CD4-positive, alpha-beta memory T cell (primary cell): ENCODE measurements at regions of chr2 and their contacts with region 1.

Region 1: GRCh38 chr2:7725171-7725849 is 808.1 kb downstream of the RNF144A start:
- DNase-seq: peak; percentile 65 to 74 (median 69)
- H3K4me3 ChIP-seq: peak overlapping the region in 1 of 2 donors; percentile 13
- H3K4me3 Mint-ChIP-seq: peak overlapping the region; percentile 53 to 92 (median 80)
- H3K27ac ChIP-seq: peak overlapping the region; percentile 26
- H3K27ac Mint-ChIP-seq: peak overlapping the region; percentile 68 to 97 (median 88)
- H3K4me1 ChIP-seq: peaks cover 40% of the 10 kb centered on the region
- H3K4me1 Mint-ChIP-seq: peaks cover 29 to 77% (median 54%) of the 10 kb centered on the region in 4 donors
- H3K27me3 ChIP-seq: no peaks in the 10 kb centered on the region
- H3K27me3 Mint-ChIP-seq: no peaks in the 10 kb centered on the region

Region 2: DNA sequence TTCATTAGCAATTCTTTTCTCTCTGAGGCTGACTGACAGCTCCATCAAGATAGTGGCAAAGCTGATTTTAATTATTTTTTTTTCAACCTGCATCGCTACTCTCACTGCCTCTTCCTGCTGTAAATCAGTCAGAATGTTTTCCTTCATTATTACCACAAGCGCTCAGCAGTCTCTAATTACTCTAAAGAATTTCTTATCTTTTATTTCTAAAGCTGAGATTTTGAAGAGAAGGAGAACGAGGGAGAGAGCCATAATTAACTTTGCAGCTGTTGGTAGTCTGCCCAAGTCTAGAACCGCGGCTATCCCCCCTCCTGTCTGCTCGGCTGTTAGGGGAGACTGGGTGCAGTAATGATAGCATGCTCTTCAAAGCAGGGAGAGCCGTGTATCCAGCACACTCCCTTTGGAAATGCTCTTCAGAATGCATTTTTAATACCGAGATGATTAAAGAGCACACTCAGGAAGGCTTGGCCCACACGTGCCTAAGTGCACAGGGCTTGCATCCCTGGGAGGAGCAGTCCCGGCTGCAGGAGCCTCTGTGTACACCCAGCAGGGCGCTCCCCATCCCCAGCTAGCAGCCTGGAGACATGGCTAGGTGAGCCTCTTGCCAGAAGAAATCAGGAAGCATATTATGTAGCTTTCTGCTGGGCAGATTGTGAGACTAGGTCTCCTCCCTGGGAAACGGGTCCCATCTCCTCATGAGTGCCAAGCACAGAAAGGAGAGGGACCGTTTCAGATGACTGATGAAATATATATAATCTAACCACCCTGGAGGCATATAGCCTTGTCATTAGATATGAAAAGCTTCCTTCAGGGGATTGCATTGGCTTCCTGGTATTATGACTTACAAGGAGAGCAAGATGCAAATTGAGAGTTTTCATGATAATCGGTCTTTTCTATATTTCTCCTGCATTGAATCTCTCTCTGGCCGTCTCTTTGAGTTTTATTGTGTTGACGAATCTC is 1414.8 kb before region 1 on chr2:
- CTCF ChIA-PET with region 1: no interaction called
- POLR2A ChIA-PET with region 1: no interaction called
- intact Hi-C with region 1: no loop called
- DNase-seq: no peak
- H3K4me3 ChIP-seq: no peak overlapping the region
- H3K4me3 Mint-ChIP-seq: no peak overlapping the region
- H3K27ac ChIP-seq: no peak overlapping the region
- H3K27ac Mint-ChIP-seq: no peak overlapping the region
- H3K4me1 ChIP-seq: no peaks in the 10 kb centered on the region
- H3K4me1 Mint-ChIP-seq: no peaks in the 10 kb centered on the region
- H3K27me3 ChIP-seq: no peaks in the 10 kb centered on the region
- H3K27me3 Mint-ChIP-seq: peaks cover 0 to 2% of the 10 kb centered on the region in 2 donors

Region 3: GRCh38 chr2:7203055-7203467 is 522.2 kb before region 1 on chr2:
- CTCF ChIA-PET with region 1: no interaction called
- POLR2A ChIA-PET with region 1: no interaction called
- intact Hi-C with region 1: loop called (anchors 5 kb)
- DNase-seq: peak; percentile 39 to 54 (median 48)
- H3K4me3 ChIP-seq: no peak overlapping the region
- H3K4me3 Mint-ChIP-seq: no peak overlapping the region
- H3K27ac ChIP-seq: no peak overlapping the region
- H3K27ac Mint-ChIP-seq: no peak overlapping the region
- H3K4me1 ChIP-seq: no peaks in the 10 kb centered on the region
- H3K4me1 Mint-ChIP-seq: no peaks in the 10 kb centered on the region
- H3K27me3 ChIP-seq: no peaks in the 10 kb centered on the region
- H3K27me3 Mint-ChIP-seq: peaks cover 0 to 2% of the 10 kb centered on the region in 2 donors

Region 4: GRCh38 chr2:7567646-7568045 is 157.7 kb before region 1 on chr2:
- CTCF ChIA-PET with region 1: interaction called, 10 read pairs
- POLR2A ChIA-PET with region 1: interaction called, 12 read pairs
- intact Hi-C with region 1: no loop called
- DNase-seq: peak in 4 of 5 donors; percentile 59 to 64 (median 60)
- H3K4me3 ChIP-seq: no peak overlapping the region
- H3K4me3 Mint-ChIP-seq: peak overlapping the region; percentile 3 to 78 (median 56)
- H3K27ac ChIP-seq: peak overlapping the region; percentile 16
- H3K27ac Mint-ChIP-seq: peak overlapping the region; percentile 48 to 93 (median 89)
- H3K4me1 ChIP-seq: peaks cover 40% of the 10 kb centered on the region
- H3K4me1 Mint-ChIP-seq: peaks cover 27 to 57% (median 46%) of the 10 kb centered on the region in 4 donors
- H3K27me3 ChIP-seq: no peaks in the 10 kb centered on the region
- H3K27me3 Mint-ChIP-seq: no peaks in the 10 kb centered on the region

Region 5: DNA sequence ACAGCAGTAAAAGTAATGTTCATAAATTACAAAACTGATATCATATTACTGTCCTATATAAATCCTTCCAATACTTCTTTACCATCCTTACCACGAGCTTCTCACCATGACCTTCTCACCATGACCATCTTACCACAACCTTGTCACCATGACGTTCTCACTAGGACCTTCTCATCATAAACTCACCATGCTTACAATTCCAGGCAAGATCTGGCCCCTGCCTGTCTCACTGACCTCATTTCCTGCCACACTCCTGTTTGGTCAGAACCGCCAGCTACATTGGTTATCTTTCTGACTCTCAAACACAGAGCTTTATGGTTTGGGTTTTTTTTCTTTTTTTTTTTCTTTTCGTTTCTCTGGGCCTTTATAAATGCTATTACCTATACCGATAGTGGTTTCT is 19.5 kb after region 1 on chr2:
- CTCF ChIA-PET with region 1: interaction called, 7 read pairs
- POLR2A ChIA-PET with region 1: interaction called, 10 read pairs
- intact Hi-C with region 1: loop called (anchors 2 kb)
- DNase-seq: peak; percentile 71 to 83 (median 75)
- H3K4me3 ChIP-seq: no peak overlapping the region
- H3K4me3 Mint-ChIP-seq: peak overlapping the region in 5 of 8 donors; percentile 7 to 71 (median 21)
- H3K27ac ChIP-seq: no peak overlapping the region
- H3K27ac Mint-ChIP-seq: peak overlapping the region; percentile 36 to 96 (median 90)
- H3K4me1 ChIP-seq: peaks cover 10% of the 10 kb centered on the region
- H3K4me1 Mint-ChIP-seq: peaks cover 17 to 45% (median 28%) of the 10 kb centered on the region in 4 donors
- H3K27me3 ChIP-seq: no peaks in the 10 kb centered on the region
- H3K27me3 Mint-ChIP-seq: no peaks in the 10 kb centered on the region

Region 6: GRCh38 chr2:8544786-8545694 is 819.7 kb after region 1 on chr2:
- CTCF ChIA-PET with region 1: interaction called, 10 read pairs
- POLR2A ChIA-PET with region 1: interaction called, 9 read pairs
- intact Hi-C with region 1: loop called (anchors 5 kb)
- DNase-seq: peak; percentile 61 to 90 (median 70)
- H3K4me3 ChIP-seq: no peak overlapping the region
- H3K4me3 Mint-ChIP-seq: peak overlapping the region; percentile 35 to 85 (median 62)
- H3K27ac ChIP-seq: peak overlapping the region; percentile 69
- H3K27ac Mint-ChIP-seq: peak overlapping the region; percentile 76 to 97 (median 94)
- H3K4me1 ChIP-seq: peaks cover 73% of the 10 kb centered on the region
- H3K4me1 Mint-ChIP-seq: peaks cover 48 to 84% (median 61%) of the 10 kb centered on the region in 4 donors
- H3K27me3 ChIP-seq: no peaks in the 10 kb centered on the region
- H3K27me3 Mint-ChIP-seq: no peaks in the 10 kb centered on the region